ENCODE measurements at regions of chr14 and their contacts with region 1.

Region 1: GRCh38 chr14:95774265-95775160 is 60.6 kb upstream of the TCL1A start:
- DNase-seq: peak; percentile 41
- ATAC-seq: peak; percentile 70
- H3K4me3 Mint-ChIP-seq: no peak overlapping the region
- H3K27ac Mint-ChIP-seq: no peak overlapping the region
- H3K4me1 Mint-ChIP-seq: peaks cover 21% of the 10 kb centered on the region
- H3K27me3 Mint-ChIP-seq: peaks cover 2% of the 10 kb centered on the region
- CTCF ChIP-seq: peak; percentile 76

Region 2: DNA sequence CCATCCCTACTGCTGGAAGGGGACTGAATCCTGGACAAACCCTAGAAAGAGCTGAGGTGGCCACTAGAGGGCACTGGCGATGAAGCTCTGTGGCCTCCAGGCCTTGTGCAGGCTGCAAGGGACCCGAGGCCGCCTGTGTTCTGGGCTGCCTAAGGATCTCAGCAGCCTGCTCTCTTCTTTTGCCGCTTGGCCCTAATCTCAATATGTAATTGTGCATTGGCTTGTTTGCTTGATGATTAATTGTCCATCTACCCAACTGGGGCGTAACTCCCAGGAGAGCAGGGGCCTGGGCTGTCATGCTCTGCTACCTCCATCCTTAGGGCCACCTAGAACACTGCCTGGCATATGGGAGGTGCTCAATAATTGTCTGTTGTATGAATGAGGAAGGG is 331.9 kb before region 1 on chr14:
- CTCF ChIA-PET with region 1: no interaction called
- POLR2A ChIA-PET with region 1: no interaction called
- intact Hi-C with region 1: loop called (anchors 5 kb)
- DNase-seq: peak; percentile 55
- ATAC-seq: peak; percentile 91
- H3K4me3 Mint-ChIP-seq: no peak overlapping the region
- H3K27ac Mint-ChIP-seq: peak overlapping the region; percentile 78
- H3K4me1 Mint-ChIP-seq: peaks cover 34% of the 10 kb centered on the region
- H3K27me3 Mint-ChIP-seq: no peaks in the 10 kb centered on the region
- CTCF ChIP-seq: no peak

Region 3: GRCh38 chr14:95609387-95609990 is 165.0 kb before region 1 on chr14:
- CTCF ChIA-PET with region 1: interaction called, 23 read pairs
- POLR2A ChIA-PET with region 1: interaction called, 3 read pairs
- intact Hi-C with region 1: loop called (anchors 1 kb)
- DNase-seq: no peak
- ATAC-seq: peak; percentile 34
- H3K4me3 Mint-ChIP-seq: no peak overlapping the region
- H3K27ac Mint-ChIP-seq: no peak overlapping the region
- H3K4me1 Mint-ChIP-seq: peaks cover 24% of the 10 kb centered on the region
- H3K27me3 Mint-ChIP-seq: peaks cover 32% of the 10 kb centered on the region
- CTCF ChIP-seq: no peak

Region 4: GRCh38 chr14:95697764-95698163 is 76.7 kb before region 1 on chr14:
- CTCF ChIA-PET with region 1: interaction called, 10 read pairs
- POLR2A ChIA-PET with region 1: interaction called, 4 read pairs
- intact Hi-C with region 1: loop called (anchors 5 kb)
- DNase-seq: no peak
- ATAC-seq: peak; percentile 64
- H3K4me3 Mint-ChIP-seq: peak overlapping the region; percentile 74
- H3K27ac Mint-ChIP-seq: peak overlapping the region; percentile 94
- H3K4me1 Mint-ChIP-seq: peaks cover 96% of the 10 kb centered on the region
- H3K27me3 Mint-ChIP-seq: peaks cover 6% of the 10 kb centered on the region
- CTCF ChIP-seq: no peak

Region 5: GRCh38 chr14:95725685-95726336 is 48.7 kb before region 1 on chr14:
- CTCF ChIA-PET with region 1: interaction called, 30 read pairs
- POLR2A ChIA-PET with region 1: interaction called, 6 read pairs
- intact Hi-C with region 1: loop called (anchors 1 kb)
- DNase-seq: no peak
- ATAC-seq: peak; percentile 81
- H3K4me3 Mint-ChIP-seq: peak overlapping the region; percentile 68
- H3K27ac Mint-ChIP-seq: peak overlapping the region; percentile 83
- H3K4me1 Mint-ChIP-seq: peaks cover 80% of the 10 kb centered on the region
- H3K27me3 Mint-ChIP-seq: peaks cover 24% of the 10 kb centered on the region
- CTCF ChIP-seq: no peak